ENCODE measurements at regions of chr13 and their contacts with region 1.

Region 1: DNA sequence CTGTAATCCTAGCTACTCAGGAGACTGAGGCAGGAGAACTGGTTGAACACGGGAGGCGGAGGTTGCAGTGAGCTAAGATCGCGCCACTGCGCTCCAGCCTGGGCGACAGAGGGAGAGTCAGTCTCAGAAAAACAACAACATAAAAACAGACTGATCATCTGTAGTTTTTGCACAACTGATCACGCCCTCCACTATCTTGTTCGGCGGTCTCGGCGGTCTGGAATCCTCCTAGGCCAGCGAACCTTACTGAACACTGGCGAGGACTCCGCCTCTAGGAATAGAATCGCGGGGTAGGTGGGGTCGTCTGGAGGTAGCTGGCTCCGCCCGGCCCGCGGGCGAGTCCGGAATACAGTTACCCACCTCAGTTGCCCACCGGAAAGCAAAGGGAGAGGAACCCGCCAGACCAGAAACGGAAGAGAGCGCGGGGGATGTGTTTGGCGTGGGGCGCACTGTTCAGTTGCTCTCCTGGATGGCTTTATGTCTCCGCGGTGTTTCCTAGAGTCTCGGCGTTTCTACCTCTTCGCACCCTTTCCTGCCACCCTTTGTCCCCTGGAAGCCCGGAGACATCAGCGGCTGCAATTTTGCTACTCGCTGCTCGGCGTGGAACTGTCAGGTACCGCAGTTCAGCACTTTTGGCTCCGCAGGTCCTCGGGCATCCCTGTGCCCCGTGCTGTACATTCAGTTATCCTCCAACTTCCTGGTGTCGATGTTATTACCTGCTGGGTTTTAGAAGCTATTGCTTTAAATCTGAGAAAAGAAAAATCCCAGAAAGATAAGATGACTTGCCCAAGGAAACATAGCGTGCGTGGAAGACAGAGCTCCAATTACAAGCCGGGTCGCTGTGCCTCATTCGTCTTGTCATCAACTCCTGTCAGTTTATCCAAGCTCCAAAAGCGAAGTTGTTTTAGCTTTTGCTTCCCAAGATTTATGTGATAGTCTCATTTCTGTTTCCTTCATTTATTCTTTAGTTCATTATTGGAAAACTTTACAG is 24.9 kb upstream of the HNRNPA1L2 start:
- DNase-seq: peak; percentile 71 to 91 (median 85)
- ATAC-seq: peak; percentile 94
- H3K4me3 ChIP-seq: peak overlapping the region; percentile 80 to 94
- H3K4me3 Mint-ChIP-seq: peak overlapping the region; percentile 99
- H3K27ac ChIP-seq: peak overlapping the region; percentile 59 to 76
- H3K27ac Mint-ChIP-seq: peak overlapping the region; percentile 98
- H3K4me1 ChIP-seq: peaks cover 7% of the 10 kb centered on the region
- H3K4me1 Mint-ChIP-seq: peaks cover 46% of the 10 kb centered on the region
- H3K27me3 ChIP-seq: no peaks in the 10 kb centered on the region
- H3K27me3 Mint-ChIP-seq: no peaks in the 10 kb centered on the region
- CTCF ChIP-seq: no peak

Region 2: DNA sequence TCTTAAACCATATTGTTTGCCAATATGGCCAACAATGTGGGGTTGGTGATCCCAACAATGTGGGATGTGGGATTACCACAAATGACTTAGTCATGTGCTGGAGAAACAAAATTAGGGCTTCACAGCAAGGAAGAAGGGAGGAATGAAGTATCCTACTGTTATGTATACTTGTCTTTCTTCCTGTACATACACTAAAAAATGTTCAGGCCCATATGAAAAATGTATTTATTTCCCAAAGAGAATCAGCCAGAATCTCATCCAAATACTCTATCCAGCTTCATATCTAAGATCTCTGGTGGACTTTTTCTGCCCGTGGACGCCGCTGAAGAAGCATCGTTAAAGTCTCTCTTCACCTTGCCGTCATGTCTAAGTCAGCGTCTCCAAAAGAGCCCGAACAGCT is 24.8 kb after region 1 on chr13 and contains the start of gene HNRNPA1L2:
- CTCF ChIA-PET with region 1: no interaction called
- POLR2A ChIA-PET with region 1: no interaction called
- intact Hi-C with region 1: no loop called
- DNase-seq: no peak
- ATAC-seq: no peak
- H3K4me3 ChIP-seq: no peak within 1 kb of the TSS
- H3K4me3 Mint-ChIP-seq: no peak within 1 kb of the TSS
- H3K27ac ChIP-seq: no peak within 1 kb of the TSS
- H3K27ac Mint-ChIP-seq: no peak within 1 kb of the TSS
- H3K4me1 ChIP-seq: no peaks in the 10 kb centered on the region
- H3K4me1 Mint-ChIP-seq: no peaks in the 10 kb centered on the region
- H3K27me3 ChIP-seq: no peaks in the 10 kb centered on the region
- H3K27me3 Mint-ChIP-seq: no peaks in the 10 kb centered on the region
- CTCF ChIP-seq: no peak
- total RNA-seq, gene HNRNPA1L2: 16.6 to 20.7 TPM

Region 3: DNA sequence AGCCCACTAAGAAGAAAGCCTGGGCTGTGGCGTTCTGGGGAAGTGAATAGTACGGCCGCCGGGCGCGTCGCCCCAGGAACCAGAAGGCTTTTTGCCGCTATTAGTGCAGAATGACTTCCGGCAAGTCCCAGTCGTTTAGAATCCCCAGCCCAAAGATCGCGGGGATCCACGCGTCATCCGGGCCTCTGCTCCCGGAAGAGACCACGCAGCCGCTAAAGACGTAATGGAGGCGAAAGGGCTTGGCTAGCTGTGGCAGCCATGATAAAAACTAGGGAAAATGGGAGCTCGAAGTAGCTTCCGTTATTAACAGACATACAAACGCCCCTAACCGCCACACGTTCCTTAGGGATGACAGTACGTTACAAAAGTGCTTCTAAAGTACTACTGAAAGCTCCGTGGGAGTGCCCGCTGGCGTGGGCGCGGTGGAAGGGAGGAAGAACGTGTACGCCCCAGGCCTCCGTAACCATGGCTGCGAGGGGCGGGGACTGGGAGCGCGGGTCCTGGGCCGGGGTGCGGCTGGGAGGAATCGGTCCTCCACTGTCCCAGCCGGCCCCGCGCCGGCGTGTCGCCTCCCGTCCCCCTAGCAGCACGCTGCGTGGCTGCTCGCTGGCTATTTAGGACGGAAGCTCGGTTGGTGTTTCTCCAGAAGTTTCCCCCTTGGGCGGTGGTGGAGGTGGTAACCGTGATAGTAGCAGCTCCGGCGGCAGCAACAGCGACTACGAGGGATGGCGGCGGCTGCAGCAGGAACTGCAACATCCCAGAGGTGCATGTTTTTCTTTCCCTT is 35.0 kb after region 1 on chr13 and contains the start of gene SUGT1:
- CTCF ChIA-PET with region 1: interaction called, 16 read pairs
- POLR2A ChIA-PET with region 1: interaction called, 55 read pairs
- intact Hi-C with region 1: loop called (anchors 1 kb)
- DNase-seq: peak; percentile 88 to 98 (median 95)
- ATAC-seq: peak; percentile 92
- H3K4me3 ChIP-seq: peak within 1 kb of the TSS; percentile 70 to 87
- H3K4me3 Mint-ChIP-seq: no peak within 1 kb of the TSS
- H3K27ac ChIP-seq: peak within 1 kb of the TSS; percentile 94 to 96
- H3K27ac Mint-ChIP-seq: no peak within 1 kb of the TSS
- H3K4me1 ChIP-seq: peaks cover 32% of the 10 kb centered on the region
- H3K4me1 Mint-ChIP-seq: peaks cover 7% of the 10 kb centered on the region
- H3K27me3 ChIP-seq: no peaks in the 10 kb centered on the region
- H3K27me3 Mint-ChIP-seq: no peaks in the 10 kb centered on the region
- CTCF ChIP-seq: peak; percentile 68
- total RNA-seq, gene SUGT1: 17.8 to 20.0 TPM